Activated CD4-positive, alpha-beta T cell treated with anti-CD3 and anti-CD28 coated beads for 36 hours (primary cell): ENCODE measurements at regions of chr10 and their contacts with region 1.

Region 1: DNA sequence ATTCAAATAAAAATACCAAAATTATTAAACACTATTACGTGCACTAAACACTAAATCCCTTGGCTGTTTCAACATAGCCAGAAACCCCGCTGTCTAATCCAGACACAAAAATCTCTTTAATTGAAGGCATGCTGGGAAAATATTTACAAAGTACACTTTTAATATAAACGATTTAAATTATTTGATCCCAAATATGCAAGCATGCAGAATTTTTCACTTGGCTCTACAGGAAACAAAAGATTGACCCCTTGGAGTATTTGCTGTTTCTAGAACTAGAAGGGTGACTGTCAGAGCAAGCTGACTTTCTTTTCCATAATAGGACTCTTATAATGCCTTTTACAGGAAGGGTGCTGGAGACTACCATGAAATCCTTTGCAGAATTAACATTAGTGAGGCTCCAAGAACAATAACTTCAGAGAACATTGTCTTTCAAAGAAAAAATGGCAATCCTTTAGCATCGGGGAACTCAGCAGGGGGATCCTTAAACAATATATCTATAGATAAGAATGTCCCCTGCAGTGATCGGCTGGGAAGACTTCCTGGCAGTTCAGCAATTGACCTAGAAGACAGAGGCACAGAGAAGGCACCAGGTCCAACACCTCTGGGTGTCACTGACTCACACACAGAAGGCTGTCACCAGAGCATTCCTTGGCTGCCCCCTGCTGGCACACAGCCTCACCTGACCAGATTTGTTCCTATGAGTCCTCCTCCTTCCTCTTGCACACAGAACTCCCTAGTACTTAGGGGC is 55.8 kb upstream of the MRLN start:
- DNase-seq: peak; percentile 88
- ATAC-seq: peak; percentile 98
- H3K4me3 Mint-ChIP-seq: no peak overlapping the region
- H3K27ac Mint-ChIP-seq: no peak overlapping the region
- H3K4me1 Mint-ChIP-seq: no peaks in the 10 kb centered on the region
- H3K27me3 Mint-ChIP-seq: no peaks in the 10 kb centered on the region

Region 2: DNA sequence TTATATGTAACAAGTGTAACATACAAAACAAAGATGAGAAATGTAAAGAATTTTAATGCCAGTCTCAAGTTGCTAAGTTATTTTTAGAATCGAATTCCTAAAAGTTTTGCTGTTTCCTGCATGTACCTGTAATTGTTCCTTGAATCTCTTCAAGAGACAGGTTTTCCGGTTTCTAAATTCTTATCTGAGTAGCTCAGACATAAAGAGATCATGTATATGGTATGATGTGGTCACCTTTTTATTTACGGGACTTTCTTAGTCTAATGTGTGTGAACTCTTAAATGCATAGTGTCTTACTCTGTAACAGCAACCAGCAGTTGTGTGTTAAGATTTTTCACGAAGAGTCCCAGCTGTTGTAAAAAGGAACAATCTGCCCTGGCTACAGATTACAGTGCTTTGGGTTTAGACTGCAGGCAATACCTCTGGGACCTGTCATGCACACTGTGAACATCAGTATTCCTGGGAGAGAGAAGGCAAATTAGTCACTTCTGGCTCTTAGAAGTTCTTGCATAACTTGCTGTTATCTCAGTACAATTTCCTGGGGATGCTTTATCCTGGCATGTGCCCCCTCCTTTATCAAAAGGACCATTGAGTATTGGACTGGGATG is 1033.0 kb before region 1 on chr10:
- CTCF ChIA-PET with region 1: no interaction called
- POLR2A ChIA-PET with region 1: no interaction called
- intact Hi-C with region 1: loop called in 1 of 2 experiments (anchors 10 kb)
- DNase-seq: no peak
- ATAC-seq: no peak
- H3K4me3 Mint-ChIP-seq: no peak overlapping the region
- H3K27ac Mint-ChIP-seq: no peak overlapping the region
- H3K4me1 Mint-ChIP-seq: no peaks in the 10 kb centered on the region
- H3K27me3 Mint-ChIP-seq: peaks cover 4% of the 10 kb centered on the region

Region 3: GRCh38 chr10:59283456-59284091 is 525.5 kb before region 1 on chr10:
- CTCF ChIA-PET with region 1: no interaction called
- POLR2A ChIA-PET with region 1: no interaction called
- intact Hi-C with region 1: no loop called
- DNase-seq: no peak
- ATAC-seq: no peak
- H3K4me3 Mint-ChIP-seq: no peak overlapping the region
- H3K27ac Mint-ChIP-seq: no peak overlapping the region
- H3K4me1 Mint-ChIP-seq: no peaks in the 10 kb centered on the region
- H3K27me3 Mint-ChIP-seq: no peaks in the 10 kb centered on the region

Region 4: DNA sequence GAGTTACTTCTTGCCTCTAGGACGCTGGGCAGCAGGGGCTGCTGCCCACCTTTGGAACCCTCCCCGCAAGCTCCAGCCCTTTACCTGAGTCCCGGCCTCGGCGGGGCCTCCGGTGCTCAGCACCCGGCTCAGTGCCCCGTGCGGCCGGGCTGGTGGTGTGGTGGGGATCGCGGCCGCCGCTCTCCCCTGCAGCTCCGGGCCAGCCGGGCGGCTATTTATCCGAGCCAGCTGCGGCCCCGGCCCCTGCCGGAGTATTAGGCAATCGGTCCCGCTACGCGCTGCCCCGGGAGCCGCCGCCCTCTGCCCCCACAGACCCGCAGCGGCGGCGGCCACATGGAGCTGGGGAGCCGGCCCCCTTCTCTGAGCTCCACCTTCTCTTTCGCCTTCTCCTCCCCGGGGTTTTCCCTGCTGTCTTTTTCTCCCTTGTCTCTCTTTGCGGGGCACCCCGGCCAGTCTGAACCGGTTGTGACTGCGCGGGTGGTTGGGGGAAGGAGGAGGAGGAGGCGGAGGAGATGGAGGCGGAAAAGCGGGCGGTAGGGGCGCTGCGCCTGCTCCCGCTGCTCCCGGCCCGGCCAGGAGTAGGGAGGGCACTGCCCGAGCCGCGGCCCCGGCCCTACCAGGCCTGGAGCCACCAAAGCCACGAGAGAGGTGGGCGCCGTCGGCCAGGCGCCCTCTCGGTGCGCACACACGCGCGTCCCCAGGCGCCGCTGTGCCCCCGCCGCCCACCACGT is 99.5 kb before region 1 on chr10 and contains the start of gene SLC16A9:
- CTCF ChIA-PET with region 1: no interaction called
- POLR2A ChIA-PET with region 1: no interaction called
- intact Hi-C with region 1: loop called (anchors 2 to 10 kb)
- DNase-seq: peak; percentile 83
- ATAC-seq: peak; percentile 94
- H3K4me3 Mint-ChIP-seq: peak within 1 kb of the TSS; percentile 68
- H3K27ac Mint-ChIP-seq: peak within 1 kb of the TSS; percentile 10
- H3K4me1 Mint-ChIP-seq: no peaks in the 10 kb centered on the region
- H3K27me3 Mint-ChIP-seq: peaks cover 52% of the 10 kb centered on the region
- total RNA-seq, gene SLC16A9: 1.0 to 1.4 TPM

Region 5: GRCh38 chr10:59779756-59780533 is 29.1 kb before region 1 on chr10:
- CTCF ChIA-PET with region 1: no interaction called
- POLR2A ChIA-PET with region 1: no interaction called
- intact Hi-C with region 1: no loop called
- DNase-seq: no peak
- ATAC-seq: no peak
- H3K4me3 Mint-ChIP-seq: no peak overlapping the region
- H3K27ac Mint-ChIP-seq: no peak overlapping the region
- H3K4me1 Mint-ChIP-seq: no peaks in the 10 kb centered on the region
- H3K27me3 Mint-ChIP-seq: peaks cover 2% of the 10 kb centered on the region